CD4-positive, alpha-beta memory T cell (primary cell): ENCODE measurements at regions of chr9 and their contacts with region 1.

Region 1: GRCh38 chr9:38371495-38371894 is 21.0 kb upstream of the ALDH1B1 start:
- DNase-seq: peak in 4 of 5 donors; percentile 16 to 38 (median 30)
- H3K4me3 ChIP-seq: no peak overlapping the region
- H3K4me3 Mint-ChIP-seq: no peak overlapping the region
- H3K27ac ChIP-seq: no peak overlapping the region
- H3K27ac Mint-ChIP-seq: peak overlapping the region in 1 of 7 donors; percentile 19
- H3K4me1 ChIP-seq: no peaks in the 10 kb centered on the region
- H3K4me1 Mint-ChIP-seq: no peaks in the 10 kb centered on the region
- H3K27me3 ChIP-seq: no peaks in the 10 kb centered on the region
- H3K27me3 Mint-ChIP-seq: peaks cover 2 to 4% of the 10 kb centered on the region in 2 donors

Region 2: GRCh38 chr9:38432922-38433510 is 61.5 kb after region 1 on chr9:
- CTCF ChIA-PET with region 1: interaction called, 3 read pairs
- POLR2A ChIA-PET with region 1: no interaction called
- intact Hi-C with region 1: loop called (anchors 5 kb)
- DNase-seq: peak in 4 of 5 donors; percentile 6 to 17 (median 15)
- H3K4me3 ChIP-seq: no peak overlapping the region
- H3K4me3 Mint-ChIP-seq: no peak overlapping the region
- H3K27ac ChIP-seq: no peak overlapping the region
- H3K27ac Mint-ChIP-seq: no peak overlapping the region
- H3K4me1 ChIP-seq: no peaks in the 10 kb centered on the region
- H3K4me1 Mint-ChIP-seq: peaks cover 8 to 10% (median 9%) of the 10 kb centered on the region in 4 donors
- H3K27me3 ChIP-seq: no peaks in the 10 kb centered on the region
- H3K27me3 Mint-ChIP-seq: peaks cover 0 to 2% of the 10 kb centered on the region in 2 donors

Region 3: DNA sequence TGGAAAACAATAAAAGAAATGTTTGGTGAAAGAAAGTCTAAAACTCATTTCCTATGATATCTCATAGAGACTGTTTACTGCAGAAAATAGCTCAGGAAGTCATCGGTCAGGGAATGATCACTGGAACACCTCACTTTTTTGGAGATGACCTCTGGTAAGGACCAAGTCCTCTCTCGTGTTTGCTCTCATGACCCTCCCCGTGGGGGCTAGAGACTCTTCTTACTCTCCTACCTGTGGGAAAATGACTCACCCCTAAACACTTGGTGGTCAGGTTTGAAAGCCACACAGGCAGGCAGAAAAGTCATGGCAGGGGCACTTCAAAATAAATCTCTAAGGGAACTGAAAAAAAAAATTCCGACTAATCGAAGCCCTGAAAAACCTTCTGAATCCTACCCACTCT is 300.3 kb after region 1 on chr9:
- CTCF ChIA-PET with region 1: no interaction called
- POLR2A ChIA-PET with region 1: no interaction called
- intact Hi-C with region 1: loop called (anchors 5 kb)
- DNase-seq: no peak
- H3K4me3 ChIP-seq: no peak overlapping the region
- H3K4me3 Mint-ChIP-seq: peak overlapping the region in 1 of 8 donors; percentile 17
- H3K27ac ChIP-seq: no peak overlapping the region
- H3K27ac Mint-ChIP-seq: peak overlapping the region in 1 of 7 donors; percentile 37
- H3K4me1 ChIP-seq: no peaks in the 10 kb centered on the region
- H3K4me1 Mint-ChIP-seq: peaks cover 1 to 8% (median 6%) of the 10 kb centered on the region in 4 donors
- H3K27me3 ChIP-seq: no peaks in the 10 kb centered on the region
- H3K27me3 Mint-ChIP-seq: peaks cover 3 to 5% of the 10 kb centered on the region in 2 donors